ENCODE measurements at regions of chr2 and their contacts with region 1.

Region 1: GRCh38 chr2:70104231-70105111 is 17.2 kb downstream of the PCBP1 start:
- DNase-seq: no peak
- H3K4me3 ChIP-seq: no peak overlapping the region
- H3K27ac ChIP-seq: no peak overlapping the region
- H3K4me1 ChIP-seq: peaks cover 15% of the 10 kb centered on the region
- H3K27me3 ChIP-seq: no peaks in the 10 kb centered on the region
- CTCF ChIP-seq: no peak

Region 2: DNA sequence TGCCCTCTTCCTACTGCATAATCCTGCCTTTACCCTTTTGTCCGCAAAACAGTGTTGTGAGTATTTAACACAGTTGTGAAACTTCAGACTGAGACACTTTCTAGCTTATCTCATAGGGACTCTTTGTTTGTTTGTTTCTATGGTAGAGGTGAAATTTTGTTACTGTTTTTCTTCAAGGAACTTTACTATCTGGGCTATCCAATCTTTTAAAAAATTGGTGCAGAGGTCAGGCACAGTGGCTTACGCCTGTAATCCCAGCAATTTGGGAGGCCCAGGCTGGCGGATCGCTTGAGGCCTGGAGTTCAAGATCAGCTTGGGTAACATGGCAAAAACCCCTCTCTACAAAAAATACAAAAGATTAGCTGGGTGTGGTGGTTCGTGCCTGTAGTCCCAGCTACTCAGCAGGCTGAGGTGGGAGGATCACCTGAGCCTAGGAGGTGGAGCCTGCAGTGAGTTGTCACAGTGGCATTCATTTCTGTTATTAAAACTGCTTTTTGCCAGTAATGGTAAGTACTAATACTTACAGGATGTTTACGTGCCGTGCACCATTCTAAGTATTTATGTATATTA is 256.2 kb before region 1 on chr2:
- CTCF ChIA-PET with region 1: interaction called, 14 read pairs
- POLR2A ChIA-PET with region 1: no interaction called
- intact Hi-C with region 1: no loop called
- DNase-seq: peak; percentile 32 to 46
- H3K4me3 ChIP-seq: no peak overlapping the region
- H3K27ac ChIP-seq: peak overlapping the region; percentile 39; the same call in 1 of the 2 replicates
- H3K4me1 ChIP-seq: peaks cover 9% of the 10 kb centered on the region
- H3K27me3 ChIP-seq: no peaks in the 10 kb centered on the region
- CTCF ChIP-seq: no peak

Region 3: DNA sequence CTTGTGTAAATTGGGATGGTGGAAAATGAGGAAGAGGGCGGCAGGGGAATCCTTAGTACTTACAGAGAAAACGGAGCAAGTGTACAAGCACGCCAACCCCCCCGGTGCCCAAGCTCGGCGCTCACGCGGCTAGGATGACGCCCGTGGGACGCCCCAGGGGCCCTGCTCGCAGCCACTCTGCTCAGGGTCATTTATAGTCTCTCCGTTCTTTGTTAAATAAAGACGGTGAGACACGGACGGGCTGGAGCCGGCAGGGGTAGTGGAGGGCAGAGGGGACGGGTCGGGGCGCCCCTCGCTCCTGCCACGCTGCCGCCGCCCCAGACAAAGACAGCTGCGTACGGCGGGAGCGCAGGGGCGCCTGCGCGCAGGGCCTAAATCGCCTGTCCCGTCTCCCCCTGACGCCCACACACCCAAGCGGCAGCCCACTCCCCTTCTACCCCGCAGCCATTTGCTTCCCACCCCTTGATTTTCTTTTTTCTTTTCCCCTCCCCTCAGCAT is 20.6 kb after region 1 on chr2:
- CTCF ChIA-PET with region 1: no interaction called
- POLR2A ChIA-PET with region 1: no interaction called
- intact Hi-C with region 1: loop called (anchors 2 kb)
- DNase-seq: no peak
- H3K4me3 ChIP-seq: peak overlapping the region; percentile 95
- H3K27ac ChIP-seq: peak overlapping the region; percentile 89
- H3K4me1 ChIP-seq: peaks cover 32% of the 10 kb centered on the region
- H3K27me3 ChIP-seq: no peaks in the 10 kb centered on the region
- CTCF ChIP-seq: no peak

Region 4: GRCh38 chr2:70248181-70248847 is 143.8 kb after region 1 on chr2 and contains the start of gene TIA1:
- CTCF ChIA-PET with region 1: no interaction called
- POLR2A ChIA-PET with region 1: no interaction called
- intact Hi-C with region 1: no loop called
- DNase-seq: peak; percentile 94 to 96
- H3K4me3 ChIP-seq: peak within 1 kb of the TSS; percentile 90
- H3K27ac ChIP-seq: peak within 1 kb of the TSS; percentile 96
- H3K4me1 ChIP-seq: peaks cover 20% of the 10 kb centered on the region
- H3K27me3 ChIP-seq: no peaks in the 10 kb centered on the region
- CTCF ChIP-seq: no peak
- total RNA-seq, gene TIA1: 104 and 121 TPM in 2 replicates

Region 5: GRCh38 chr2:70412294-70413070 is 308.0 kb after region 1 on chr2:
- CTCF ChIA-PET with region 1: no interaction called
- POLR2A ChIA-PET with region 1: no interaction called
- intact Hi-C with region 1: no loop called
- DNase-seq: no peak
- H3K4me3 ChIP-seq: no peak overlapping the region
- H3K27ac ChIP-seq: no peak overlapping the region
- H3K4me1 ChIP-seq: peaks cover 10% of the 10 kb centered on the region
- H3K27me3 ChIP-seq: no peaks in the 10 kb centered on the region
- CTCF ChIP-seq: no peak

Measured in PC-9 (cell line).